Mammary epithelial cell (primary cell): ENCODE measurements at regions of chr4 and their contacts with region 1.

Region 1: DNA sequence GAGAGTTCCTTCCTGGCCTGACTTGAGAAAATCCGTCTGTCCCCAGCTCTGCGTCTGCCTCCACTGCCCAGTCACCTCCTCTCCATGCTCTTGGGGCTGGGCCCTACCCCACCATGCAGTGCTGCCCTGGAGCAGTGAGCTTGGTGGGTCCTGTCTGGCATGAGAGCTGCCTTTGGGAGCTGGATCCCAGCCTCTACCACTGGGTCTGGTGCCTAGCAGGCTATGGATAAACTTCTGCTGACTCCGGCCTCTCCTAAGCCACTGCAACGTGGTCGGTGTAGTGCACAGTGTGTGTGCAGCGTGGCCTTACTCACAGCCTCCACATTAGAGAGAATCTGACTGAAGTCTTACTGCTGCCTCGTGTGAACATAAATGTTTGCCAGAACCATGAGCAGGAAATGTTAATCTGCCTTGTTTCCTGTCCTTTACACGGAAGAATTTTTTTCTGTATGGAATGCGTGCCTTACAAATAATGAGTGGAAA is 47.6 kb downstream of the HTT start:
- DNase-seq: no peak
- H3K4me3 ChIP-seq: no peak overlapping the region
- H3K27ac ChIP-seq: no peak overlapping the region
- H3K4me1 ChIP-seq: no peaks in the 10 kb centered on the region
- H3K27me3 ChIP-seq: no peaks in the 10 kb centered on the region
- CTCF ChIP-seq: no peak

Region 2: GRCh38 chr4:3186609-3187008 is 64.5 kb after region 1 on chr4:
- CTCF ChIA-PET with region 1: no interaction called
- dilution Hi-C with region 1: loop called (anchors 10 kb)
- in situ Hi-C with region 1: no loop called
- intact Hi-C with region 1: no loop called
- DNase-seq: no peak
- H3K4me3 ChIP-seq: no peak overlapping the region
- H3K27ac ChIP-seq: no peak overlapping the region
- H3K4me1 ChIP-seq: peaks cover under 1% of the 10 kb centered on the region
- H3K27me3 ChIP-seq: no peaks in the 10 kb centered on the region
- CTCF ChIP-seq: no peak